AG04449 (cell line): ENCODE measurements at regions of chr4 and their contacts with region 1.

Region 1: DNA sequence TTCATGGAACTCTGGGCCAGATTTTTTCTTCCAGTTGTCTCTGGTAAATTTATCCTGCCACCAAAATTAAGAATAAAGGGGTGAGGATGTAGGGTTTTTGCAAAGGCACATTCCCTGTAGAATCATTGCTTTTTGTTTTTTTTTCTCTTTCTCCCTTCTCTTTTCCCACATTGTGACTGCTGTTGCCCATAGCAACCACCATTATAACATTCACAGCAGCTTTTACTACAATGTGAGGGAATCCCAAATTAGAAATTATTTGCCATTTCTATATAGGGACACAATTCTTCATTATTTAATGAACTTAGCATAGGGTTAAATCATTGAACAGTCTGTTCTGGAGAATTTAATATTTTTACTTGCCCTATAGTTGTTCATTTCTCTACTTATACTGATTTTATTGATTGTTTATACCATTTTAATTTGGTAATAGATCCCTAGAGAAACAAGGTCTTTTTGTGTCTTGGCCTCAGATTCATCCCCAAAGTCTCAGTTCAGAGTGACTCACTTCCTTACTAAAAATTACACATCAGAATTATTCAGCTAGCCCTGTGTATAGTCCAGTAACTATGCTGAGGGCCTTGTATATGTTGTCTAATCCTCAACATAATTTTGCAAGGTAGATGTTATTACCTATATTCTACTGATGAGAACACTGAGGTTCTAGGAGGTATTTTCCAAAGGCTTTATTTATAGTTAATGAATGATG is 80.8 kb upstream of the ANK2 start:
- DNase-seq: no peak
- H3K4me3 ChIP-seq: no peak overlapping the region
- CTCF ChIP-seq: no peak

Region 2: DNA sequence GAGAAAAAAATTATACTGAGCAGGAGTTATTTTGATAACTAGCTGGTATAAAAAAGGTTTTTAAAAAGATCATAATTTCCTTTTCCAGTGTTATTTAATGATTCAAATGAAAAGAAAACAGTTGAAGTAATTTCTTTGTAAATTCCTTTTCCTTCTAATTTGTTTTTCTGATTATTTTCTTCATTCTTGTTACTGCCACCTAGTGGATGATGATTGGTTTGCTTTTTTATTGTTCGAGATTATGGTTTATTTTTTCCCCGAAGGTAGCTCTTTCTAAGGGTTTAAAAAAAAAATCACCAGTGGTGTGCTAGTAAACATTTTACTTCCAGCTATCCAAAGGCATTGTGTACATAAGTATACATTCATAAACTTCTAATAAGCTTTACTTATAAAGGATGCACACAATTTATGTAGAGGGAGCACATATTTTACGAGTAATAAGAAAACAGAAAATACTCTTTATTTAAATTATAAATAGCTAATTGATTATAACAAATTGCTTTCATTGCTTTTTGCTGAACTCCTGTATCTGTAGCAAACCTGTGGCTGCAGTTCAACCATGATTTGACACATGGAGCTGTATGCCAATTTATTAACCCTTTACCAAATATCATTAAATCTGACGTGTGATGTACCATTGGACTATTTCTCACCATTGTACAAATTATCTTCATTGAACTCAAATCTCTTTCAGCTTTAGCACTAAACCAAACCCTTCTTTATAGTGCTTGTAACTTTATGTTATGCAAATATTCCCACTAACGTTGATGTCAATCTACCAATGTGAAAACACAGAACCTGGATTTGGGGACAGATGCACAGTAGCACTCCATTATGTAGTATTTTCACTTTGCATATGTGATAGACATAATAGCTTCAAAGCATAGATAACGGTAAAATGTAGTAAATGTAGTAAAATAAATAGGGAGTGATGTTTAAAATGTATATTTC is 17.0 kb before region 1 on chr4:
- CTCF ChIA-PET with region 1: interaction called, 16 read pairs
- POLR2A ChIA-PET with region 1: no interaction called
- DNase-seq: no peak
- H3K4me3 ChIP-seq: no peak overlapping the region
- CTCF ChIP-seq: peak; percentile 6